ENCODE measurements at regions of chr13 and their contacts with region 1.

Region 1: GRCh38 chr13:106100171-106100919 is 435.1 kb downstream of the EFNB2 start:
- DNase-seq: peak; percentile 95 to 98
- H3K4me3 ChIP-seq: peak overlapping the region; percentile 11; the same call in 1 of the 2 replicates
- H3K4me3 Mint-ChIP-seq: peak overlapping the region; percentile 68
- H3K27ac Mint-ChIP-seq: peak overlapping the region; percentile 92
- H3K4me1 ChIP-seq: peaks cover 95% of the 10 kb centered on the region
- H3K4me1 Mint-ChIP-seq: peaks cover 67% of the 10 kb centered on the region
- H3K27me3 ChIP-seq: no peaks in the 10 kb centered on the region
- H3K27me3 Mint-ChIP-seq: no peaks in the 10 kb centered on the region
- CTCF ChIP-seq: no peak

Region 2: DNA sequence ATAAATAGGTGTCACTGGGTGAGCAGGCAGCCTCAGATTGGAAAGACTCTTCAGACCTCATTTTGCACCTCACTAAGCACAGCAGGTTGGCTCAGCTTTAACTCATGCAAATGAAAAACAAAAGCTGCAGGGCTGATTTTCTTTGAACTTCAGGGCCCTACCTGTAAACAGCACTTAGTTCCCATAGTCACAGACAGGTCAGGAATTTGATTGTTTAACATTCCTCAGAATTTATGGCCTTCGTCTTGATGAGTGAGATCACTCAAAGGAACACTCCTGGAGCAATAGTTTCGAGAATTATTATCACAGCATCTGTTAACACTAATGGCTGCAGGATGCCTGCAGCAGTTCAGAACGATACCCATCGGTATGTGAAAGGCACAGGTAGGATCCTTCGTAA is 283.3 kb before region 1 on chr13:
- CTCF ChIA-PET with region 1: no interaction called
- POLR2A ChIA-PET with region 1: no interaction called
- intact Hi-C with region 1: loop called (anchors 2 kb)
- DNase-seq: peak; percentile 62 to 75
- H3K4me3 ChIP-seq: no peak overlapping the region
- H3K4me3 Mint-ChIP-seq: peak overlapping the region; percentile 38
- H3K27ac Mint-ChIP-seq: peak overlapping the region; percentile 97
- H3K4me1 ChIP-seq: peaks cover 28% of the 10 kb centered on the region
- H3K4me1 Mint-ChIP-seq: peaks cover 23% of the 10 kb centered on the region
- H3K27me3 ChIP-seq: no peaks in the 10 kb centered on the region
- H3K27me3 Mint-ChIP-seq: no peaks in the 10 kb centered on the region
- CTCF ChIP-seq: no peak

Region 3: GRCh38 chr13:106078191-106078590 is 22.2 kb before region 1 on chr13:
- CTCF ChIA-PET with region 1: no interaction called
- POLR2A ChIA-PET with region 1: no interaction called
- intact Hi-C with region 1: loop called (anchors 1 kb)
- DNase-seq: peak; percentile 53 to 64
- H3K4me3 ChIP-seq: no peak overlapping the region
- H3K4me3 Mint-ChIP-seq: peak overlapping the region; percentile 58
- H3K27ac Mint-ChIP-seq: peak overlapping the region; percentile 84
- H3K4me1 ChIP-seq: peaks cover 30% of the 10 kb centered on the region
- H3K4me1 Mint-ChIP-seq: peaks cover 31% of the 10 kb centered on the region
- H3K27me3 ChIP-seq: no peaks in the 10 kb centered on the region
- H3K27me3 Mint-ChIP-seq: no peaks in the 10 kb centered on the region
- CTCF ChIP-seq: no peak

Region 4: DNA sequence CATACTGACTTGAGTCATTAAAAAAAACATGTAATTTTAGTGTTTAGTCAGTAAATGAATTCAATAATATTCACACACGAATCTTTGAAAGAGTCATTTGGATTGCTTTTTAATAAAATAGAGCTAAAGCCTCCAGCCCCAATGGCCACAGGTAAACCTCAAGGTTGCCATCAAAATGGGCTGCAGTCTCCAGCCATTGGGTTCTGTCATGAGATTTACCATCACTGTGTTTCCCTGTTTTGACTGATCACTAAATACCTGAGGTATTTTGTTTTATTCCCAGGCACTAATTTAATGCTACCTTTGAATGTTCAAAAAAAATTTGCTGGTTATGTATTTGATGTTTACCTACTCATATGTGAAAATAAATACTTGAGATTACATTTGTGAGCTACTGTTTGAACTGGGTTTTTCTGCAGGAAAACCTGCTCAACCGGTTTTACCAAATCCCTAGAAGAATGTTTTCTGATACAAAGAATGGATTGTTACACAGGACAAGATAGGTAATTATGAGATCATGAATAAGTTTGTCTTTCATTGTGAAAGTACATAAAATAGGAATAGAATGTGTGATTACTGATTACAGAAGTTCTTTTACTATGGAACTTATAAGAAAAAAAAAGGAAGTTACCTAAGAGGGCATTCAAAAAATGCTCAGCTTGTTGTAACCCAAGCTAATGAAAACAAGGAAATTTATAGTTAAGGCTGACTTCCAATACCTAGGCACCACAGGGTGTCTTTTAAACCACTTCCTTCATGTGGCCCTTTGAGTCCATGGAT is 43.8 kb after region 1 on chr13:
- CTCF ChIA-PET with region 1: interaction called, 7 read pairs
- POLR2A ChIA-PET with region 1: no interaction called
- intact Hi-C with region 1: loop called (anchors 1 kb)
- DNase-seq: peak; percentile 77 to 86
- H3K4me3 ChIP-seq: no peak overlapping the region
- H3K4me3 Mint-ChIP-seq: peak overlapping the region; percentile 50
- H3K27ac Mint-ChIP-seq: peak overlapping the region; percentile 93
- H3K4me1 ChIP-seq: peaks cover 63% of the 10 kb centered on the region
- H3K4me1 Mint-ChIP-seq: peaks cover 56% of the 10 kb centered on the region
- H3K27me3 ChIP-seq: no peaks in the 10 kb centered on the region
- H3K27me3 Mint-ChIP-seq: no peaks in the 10 kb centered on the region
- CTCF ChIP-seq: no peak

Region 5: DNA sequence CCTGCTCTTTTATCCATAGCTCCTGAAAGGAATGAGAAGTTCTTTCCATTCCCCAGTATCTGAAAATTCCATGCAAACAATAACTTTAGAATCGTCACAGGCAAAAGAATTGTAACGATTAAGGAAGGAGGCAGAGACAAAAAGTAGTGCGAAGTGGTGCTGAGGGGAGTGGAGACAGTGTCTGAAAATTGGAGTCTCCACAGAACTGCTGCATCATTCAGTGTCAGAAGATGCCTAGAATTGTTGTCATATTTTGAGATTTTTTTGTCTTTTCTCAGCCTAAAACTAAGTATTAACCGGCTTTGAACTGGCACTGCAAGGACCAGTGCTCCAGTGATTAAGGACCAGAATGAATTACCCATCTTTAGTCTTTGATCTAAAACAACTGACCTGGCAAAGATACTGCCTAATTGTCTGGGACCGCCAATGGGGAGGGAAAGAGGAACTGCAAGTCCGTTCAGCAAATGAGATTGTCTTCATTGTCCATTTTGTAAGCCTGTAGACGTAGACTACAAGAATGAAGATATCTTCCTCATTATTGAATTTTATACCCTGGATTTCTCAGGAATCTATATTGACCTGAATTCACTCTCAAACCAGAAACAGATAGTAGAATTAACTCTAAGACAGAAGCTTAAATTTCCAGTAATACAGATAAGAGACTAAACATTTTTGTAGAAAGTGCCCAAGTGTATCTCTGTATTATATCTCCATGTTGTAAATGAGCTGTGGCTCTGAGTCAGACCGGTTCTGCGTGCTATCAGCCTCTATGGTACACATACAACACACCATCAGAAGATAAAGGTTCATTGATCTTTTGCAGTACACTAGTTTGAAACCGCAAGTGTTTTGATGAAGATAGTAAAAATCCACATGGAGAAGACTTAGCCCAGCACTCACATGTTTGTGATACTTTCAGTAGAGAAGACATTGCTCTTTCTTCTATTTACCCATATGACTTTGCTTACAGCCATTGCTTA is 141.9 kb after region 1 on chr13:
- CTCF ChIA-PET with region 1: interaction called, 6 read pairs
- POLR2A ChIA-PET with region 1: no interaction called
- intact Hi-C with region 1: loop called (anchors 1 kb)
- DNase-seq: peak; percentile 63 to 72
- H3K4me3 ChIP-seq: no peak overlapping the region; the same call in 1 of the 2 replicates
- H3K4me3 Mint-ChIP-seq: peak overlapping the region; percentile 69
- H3K27ac Mint-ChIP-seq: peak overlapping the region; percentile 91
- H3K4me1 ChIP-seq: peaks cover 30% of the 10 kb centered on the region
- H3K4me1 Mint-ChIP-seq: peaks cover 31% of the 10 kb centered on the region
- H3K27me3 ChIP-seq: no peaks in the 10 kb centered on the region
- H3K27me3 Mint-ChIP-seq: no peaks in the 10 kb centered on the region
- CTCF ChIP-seq: no peak

Region 6: GRCh38 chr13:106536244-106537034 is 436.1 kb after region 1 on chr13:
- CTCF ChIA-PET with region 1: no interaction called
- POLR2A ChIA-PET with region 1: no interaction called
- intact Hi-C with region 1: loop called (anchors 1 kb)
- DNase-seq: peak; percentile 88 to 93
- H3K4me3 ChIP-seq: peak overlapping the region; percentile 93
- H3K4me3 Mint-ChIP-seq: peak overlapping the region; percentile 97
- H3K27ac Mint-ChIP-seq: peak overlapping the region; percentile 94
- H3K4me1 ChIP-seq: peaks cover 7% of the 10 kb centered on the region
- H3K4me1 Mint-ChIP-seq: peaks cover 7% of the 10 kb centered on the region
- H3K27me3 ChIP-seq: no peaks in the 10 kb centered on the region
- H3K27me3 Mint-ChIP-seq: no peaks in the 10 kb centered on the region
- CTCF ChIP-seq: peak; percentile 93 to 98